Activated naive CD4-positive, alpha-beta T cell treated with anti-CD3 and anti-CD28 coated beads for 36 hours (primary cell): ENCODE measurements at regions of chr1 and their contacts with region 1.

Region 1: DNA sequence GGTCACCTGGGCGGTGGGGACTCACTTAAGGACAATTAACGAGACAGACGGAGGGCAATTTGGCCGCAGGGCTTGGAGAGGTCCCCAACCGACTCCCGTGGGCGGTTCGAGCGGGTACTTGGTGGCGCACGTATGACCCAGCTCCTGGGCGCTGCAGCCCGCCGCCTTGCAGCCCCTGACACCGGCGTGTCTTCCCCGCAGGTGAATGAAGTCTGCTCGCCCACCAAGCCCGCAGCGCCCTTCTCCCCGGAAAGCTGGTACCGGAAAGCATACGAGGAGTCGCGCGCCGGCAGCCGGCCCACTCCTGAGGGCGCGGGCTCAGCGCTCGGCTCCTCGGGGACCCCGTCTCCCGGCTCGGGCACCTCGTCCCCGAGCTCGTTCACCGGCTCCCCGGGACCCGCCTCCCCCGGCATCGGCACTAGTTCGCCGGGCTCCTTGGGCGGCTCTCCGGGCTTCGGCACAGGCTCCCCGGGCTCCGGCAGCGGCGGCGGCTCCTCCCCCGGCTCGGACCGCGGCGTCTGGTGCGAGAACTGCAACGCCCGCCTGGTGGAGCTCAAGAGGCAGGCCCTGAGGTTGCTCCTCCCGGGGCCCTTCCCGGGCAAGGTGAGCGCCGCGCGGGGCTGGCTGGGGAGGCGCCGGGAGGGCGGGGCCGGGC is 1.4 kb downstream of the KIF26B start:
- DNase-seq: peak; percentile 89
- H3K4me3 Mint-ChIP-seq: peak overlapping the region; percentile 71
- H3K27ac Mint-ChIP-seq: no peak overlapping the region
- H3K4me1 Mint-ChIP-seq: peaks cover 17% of the 10 kb centered on the region
- H3K27me3 Mint-ChIP-seq: peaks cover 61% of the 10 kb centered on the region

Region 2: DNA sequence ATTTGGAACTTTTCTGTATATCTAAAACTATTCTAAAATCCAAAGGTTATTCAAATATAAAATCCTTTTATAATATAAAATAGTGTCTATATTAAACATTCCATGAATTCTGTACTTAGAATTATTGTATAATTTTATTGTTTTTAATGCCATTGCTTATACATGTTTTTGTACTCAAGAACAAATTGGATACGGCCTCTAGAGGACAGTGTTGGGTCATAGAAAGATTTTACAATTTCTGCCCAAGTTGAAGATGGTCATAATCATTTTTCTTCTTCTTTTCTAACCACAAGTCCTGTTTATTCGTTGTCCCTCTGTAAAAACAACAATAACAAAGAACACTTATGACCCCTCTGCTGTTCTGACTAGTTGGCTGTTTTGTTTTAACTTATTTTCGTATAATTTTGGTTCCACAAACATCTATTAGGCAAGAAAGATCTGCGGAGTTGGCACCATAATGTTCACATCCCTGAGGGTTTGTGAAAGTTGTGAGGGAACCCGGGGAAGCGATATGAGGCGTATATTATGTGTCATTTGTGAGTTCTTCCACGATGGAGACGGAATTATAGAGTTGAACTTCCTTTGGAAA is 77.1 kb before region 1 on chr1:
- CTCF ChIA-PET with region 1: no interaction called
- intact Hi-C with region 1: loop called (anchors 5 kb)
- DNase-seq: no peak
- H3K4me3 Mint-ChIP-seq: no peak overlapping the region
- H3K27ac Mint-ChIP-seq: no peak overlapping the region
- H3K4me1 Mint-ChIP-seq: no peaks in the 10 kb centered on the region
- H3K27me3 Mint-ChIP-seq: peaks cover 3% of the 10 kb centered on the region

Region 3: GRCh38 chr1:245177071-245177900 is 21.1 kb after region 1 on chr1:
- CTCF ChIA-PET with region 1: no interaction called
- intact Hi-C with region 1: no loop called
- DNase-seq: no peak
- H3K4me3 Mint-ChIP-seq: no peak overlapping the region
- H3K27ac Mint-ChIP-seq: no peak overlapping the region
- H3K4me1 Mint-ChIP-seq: no peaks in the 10 kb centered on the region
- H3K27me3 Mint-ChIP-seq: no peaks in the 10 kb centered on the region

Region 4: GRCh38 chr1:245380790-245381535 is 224.8 kb after region 1 on chr1:
- CTCF ChIA-PET with region 1: interaction called, 6 read pairs
- intact Hi-C with region 1: loop called (anchors 2 kb)
- DNase-seq: no peak
- H3K4me3 Mint-ChIP-seq: no peak overlapping the region
- H3K27ac Mint-ChIP-seq: no peak overlapping the region
- H3K4me1 Mint-ChIP-seq: peaks cover 15% of the 10 kb centered on the region
- H3K27me3 Mint-ChIP-seq: peaks cover 2% of the 10 kb centered on the region

Region 5: DNA sequence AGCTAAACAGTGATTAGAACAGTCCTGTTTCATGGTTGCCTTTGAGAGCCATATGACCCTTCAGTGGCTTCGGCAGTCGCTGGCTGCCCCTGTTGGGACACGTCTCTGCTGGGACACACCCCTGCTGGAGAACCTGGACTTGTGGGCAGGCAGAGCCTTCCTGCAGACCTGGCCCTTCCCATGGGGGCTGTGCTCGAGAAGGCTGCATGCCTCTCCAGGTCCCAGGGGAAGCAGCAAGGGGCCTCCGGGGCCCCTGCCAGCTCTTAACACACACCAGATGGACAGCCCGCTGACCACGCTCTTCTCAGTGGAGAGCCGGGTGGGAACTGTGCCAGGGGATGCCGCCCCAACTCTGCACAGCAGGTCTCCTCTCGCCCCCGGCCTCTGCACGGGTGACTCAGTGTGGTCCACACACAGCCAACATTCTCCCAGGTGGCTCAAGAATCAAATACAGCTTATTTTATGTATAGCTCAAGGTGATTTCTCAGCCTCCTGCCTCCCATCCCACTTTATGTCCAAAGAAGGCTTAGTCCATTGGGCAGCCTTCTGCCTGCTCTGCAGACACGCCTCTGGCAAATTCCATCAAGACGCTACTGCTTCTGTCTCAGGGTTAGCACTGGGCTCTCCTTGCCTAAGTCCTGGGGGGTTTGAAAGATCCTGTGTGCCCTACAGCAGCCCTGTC is 449.4 kb after region 1 on chr1:
- CTCF ChIA-PET with region 1: no interaction called
- intact Hi-C with region 1: no loop called
- DNase-seq: no peak
- H3K4me3 Mint-ChIP-seq: no peak overlapping the region
- H3K27ac Mint-ChIP-seq: no peak overlapping the region
- H3K4me1 Mint-ChIP-seq: no peaks in the 10 kb centered on the region
- H3K27me3 Mint-ChIP-seq: peaks cover 4% of the 10 kb centered on the region

Region 6: DNA sequence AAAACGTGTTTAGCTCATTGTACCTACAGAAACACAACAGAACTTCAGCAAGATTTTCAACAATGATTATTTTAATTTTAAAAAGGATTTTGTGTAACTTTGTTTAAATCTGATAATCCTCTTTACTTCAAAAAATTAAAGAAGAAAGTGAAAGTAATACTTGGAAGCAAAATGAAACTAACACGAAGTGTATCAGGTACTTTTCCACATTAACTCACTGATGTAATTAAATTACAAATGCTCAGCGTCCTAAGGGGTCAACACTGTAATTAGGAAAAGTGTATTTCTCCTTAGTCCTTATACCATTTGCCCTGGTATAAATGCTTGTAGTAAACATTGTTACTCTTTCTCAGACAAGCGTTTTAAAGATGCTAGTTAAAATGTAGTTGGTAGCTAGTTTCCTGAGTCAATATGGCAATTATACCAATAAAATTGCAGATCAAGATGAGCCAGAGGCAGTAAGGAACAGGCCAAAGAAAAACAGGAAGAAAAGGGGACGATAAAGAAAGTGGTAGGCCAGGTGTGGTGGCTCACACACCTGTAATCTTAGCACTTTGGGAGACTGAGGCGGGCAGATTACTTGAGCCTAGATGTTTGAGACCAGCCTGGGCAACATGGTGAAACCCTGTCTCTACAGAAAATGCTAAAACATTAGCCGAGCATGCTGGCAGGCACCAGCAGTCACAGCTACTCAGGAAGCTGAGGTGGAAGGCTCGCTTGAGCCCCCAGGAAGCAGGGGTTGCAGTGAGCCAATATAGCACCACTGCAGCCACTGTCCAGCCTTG is 797.9 kb after region 1 on chr1:
- CTCF ChIA-PET with region 1: no interaction called
- intact Hi-C with region 1: loop called (anchors 1 kb)
- DNase-seq: peak; percentile 17
- H3K4me3 Mint-ChIP-seq: peak overlapping the region; percentile 54
- H3K27ac Mint-ChIP-seq: peak overlapping the region; percentile 87
- H3K4me1 Mint-ChIP-seq: peaks cover 27% of the 10 kb centered on the region
- H3K27me3 Mint-ChIP-seq: no peaks in the 10 kb centered on the region

Region 7: GRCh38 chr1:246117066-246117791 is 961.0 kb after region 1 on chr1:
- CTCF ChIA-PET with region 1: no interaction called
- intact Hi-C with region 1: loop called (anchors 2 kb)
- DNase-seq: peak; percentile 45
- H3K4me3 Mint-ChIP-seq: peak overlapping the region; percentile 3
- H3K27ac Mint-ChIP-seq: peak overlapping the region; percentile 42
- H3K4me1 Mint-ChIP-seq: peaks cover 19% of the 10 kb centered on the region
- H3K27me3 Mint-ChIP-seq: no peaks in the 10 kb centered on the region

Region 8: DNA sequence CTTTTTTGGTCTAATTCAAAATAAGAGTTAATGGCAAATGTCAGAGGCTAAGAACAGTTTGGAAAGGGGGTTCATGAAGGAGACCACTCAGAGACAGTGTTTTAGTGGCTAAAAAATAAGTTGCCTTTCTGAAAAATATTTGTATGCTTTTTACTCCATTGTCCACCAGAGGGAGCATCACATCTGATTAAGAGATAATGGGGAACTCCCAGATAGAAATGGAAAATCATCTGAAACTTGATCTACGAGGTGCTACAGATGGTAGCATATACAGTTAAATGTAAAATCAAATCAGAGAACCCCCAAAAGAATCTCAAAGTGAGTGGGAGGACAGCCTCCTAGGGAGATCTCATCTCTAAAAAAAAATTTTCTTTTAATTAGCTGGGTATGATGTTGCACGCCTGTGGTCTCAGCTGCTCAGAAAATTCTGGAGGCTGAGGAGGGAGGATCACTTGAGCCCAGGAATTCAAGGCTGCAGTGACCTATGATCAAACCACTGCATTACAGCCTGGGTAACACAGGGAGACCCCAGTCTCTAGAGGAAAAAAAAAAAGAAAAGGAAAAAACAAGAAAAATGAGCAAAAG is 1341.2 kb after region 1 on chr1:
- CTCF ChIA-PET with region 1: interaction called, 7 read pairs
- intact Hi-C with region 1: loop called (anchors 1 kb)
- DNase-seq: no peak
- H3K4me3 Mint-ChIP-seq: no peak overlapping the region
- H3K27ac Mint-ChIP-seq: no peak overlapping the region
- H3K4me1 Mint-ChIP-seq: peaks cover 13% of the 10 kb centered on the region
- H3K27me3 Mint-ChIP-seq: no peaks in the 10 kb centered on the region